Panc1 (cell line): ENCODE measurements at regions of chr6 and their contacts with region 1.

Region 1: DNA sequence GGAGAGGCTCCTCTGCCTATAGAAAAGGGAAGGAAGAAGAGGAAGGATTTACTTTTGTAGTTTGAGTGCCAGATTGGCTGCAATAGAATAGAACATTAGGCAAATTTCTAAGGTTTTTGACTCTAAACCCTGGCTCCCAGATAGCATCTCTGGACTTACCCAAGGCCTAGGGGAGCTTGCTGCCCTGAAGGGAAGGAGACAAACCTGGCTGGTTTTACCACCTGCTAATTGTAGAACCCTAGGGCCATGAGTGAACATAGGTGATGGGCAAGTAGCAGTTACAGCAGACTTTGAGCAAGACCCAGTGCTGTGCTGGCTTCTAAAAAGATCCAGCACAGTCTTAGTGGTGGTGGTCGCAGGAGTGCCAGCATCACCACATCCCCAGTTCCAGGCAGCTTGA is 305.6 kb upstream of the FKBP1C start:
- DNase-seq: no peak
- ATAC-seq: no peak
- H3K4me3 ChIP-seq: no peak overlapping the region
- H3K27ac ChIP-seq: no peak overlapping the region
- H3K4me1 ChIP-seq: no peaks in the 10 kb centered on the region
- H3K27me3 ChIP-seq: no peaks in the 10 kb centered on the region
- CTCF ChIP-seq: no peak

Region 2: DNA sequence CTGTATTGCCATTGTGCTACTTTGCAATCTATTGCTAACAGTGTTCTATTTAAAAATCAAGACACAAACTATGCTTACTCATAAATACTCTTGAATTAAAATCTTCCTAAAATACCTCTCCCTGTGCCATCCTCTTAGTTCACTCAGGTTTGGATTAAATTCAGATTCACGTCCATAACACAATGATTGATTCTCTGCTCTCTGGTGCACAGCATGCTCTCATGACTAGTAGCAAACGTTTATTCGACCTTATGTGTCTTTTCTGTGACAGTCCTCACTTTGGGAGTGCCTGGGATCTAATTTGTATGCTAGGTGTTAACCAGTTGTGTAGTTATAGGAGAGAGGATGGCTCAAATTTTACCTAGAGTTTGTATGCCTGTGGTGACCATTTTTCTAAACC is 35.2 kb after region 1 on chr6:
- CTCF ChIA-PET with region 1: interaction called, 15 read pairs
- POLR2A ChIA-PET with region 1: no interaction called
- in situ Hi-C with region 1: no loop called
- intact Hi-C with region 1: no loop called
- DNase-seq: no peak
- ATAC-seq: no peak
- H3K4me3 ChIP-seq: no peak overlapping the region
- H3K27ac ChIP-seq: no peak overlapping the region
- H3K4me1 ChIP-seq: no peaks in the 10 kb centered on the region
- H3K27me3 ChIP-seq: no peaks in the 10 kb centered on the region
- CTCF ChIP-seq: no peak